GM13977 (cell line): ENCODE measurements at regions of chrX and their contacts with region 1.

Region 1: GRCh38 chrX:37509349-37509748 is 62.1 kb upstream of the LANCL3 start:
- DNase-seq: no peak
- CTCF ChIP-seq: peak; percentile 22

Region 2: GRCh38 chrX:37846934-37847732 is 337.8 kb after region 1 on chrX and contains the start of gene DYNLT3:
- in situ Hi-C with region 1: loop called (anchors 25 kb)
- DNase-seq: peak; percentile 82
- CTCF ChIP-seq: no peak